ENCODE measurements at regions of chr6 and their contacts with region 1.

Region 1: DNA sequence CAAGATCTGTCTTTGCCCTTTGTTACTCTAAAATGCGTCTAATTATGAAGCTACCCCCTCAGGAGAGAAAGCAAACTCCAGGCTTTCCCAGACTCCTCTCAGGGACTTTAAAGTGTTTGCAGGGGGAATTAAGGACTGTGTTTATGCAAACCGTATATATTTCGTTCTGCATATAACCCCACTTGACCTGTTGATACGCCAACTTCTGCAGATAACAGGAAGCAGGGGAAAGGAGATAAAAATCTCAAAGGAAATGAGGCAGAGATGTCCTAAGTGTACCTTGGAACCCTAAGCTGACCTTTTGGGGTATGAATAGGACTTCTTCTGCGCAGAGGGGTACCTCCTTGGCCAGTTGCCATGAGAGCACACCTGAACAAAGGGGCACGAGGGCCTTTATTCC is 8.1 kb downstream of the SYCP2L start:
- DNase-seq: no peak
- ATAC-seq: no peak
- H3K4me3 ChIP-seq: no peak overlapping the region
- H3K27ac ChIP-seq: no peak overlapping the region
- H3K4me1 ChIP-seq: no peaks in the 10 kb centered on the region
- H3K27me3 ChIP-seq: no peaks in the 10 kb centered on the region
- CTCF ChIP-seq: no peak

Region 2: DNA sequence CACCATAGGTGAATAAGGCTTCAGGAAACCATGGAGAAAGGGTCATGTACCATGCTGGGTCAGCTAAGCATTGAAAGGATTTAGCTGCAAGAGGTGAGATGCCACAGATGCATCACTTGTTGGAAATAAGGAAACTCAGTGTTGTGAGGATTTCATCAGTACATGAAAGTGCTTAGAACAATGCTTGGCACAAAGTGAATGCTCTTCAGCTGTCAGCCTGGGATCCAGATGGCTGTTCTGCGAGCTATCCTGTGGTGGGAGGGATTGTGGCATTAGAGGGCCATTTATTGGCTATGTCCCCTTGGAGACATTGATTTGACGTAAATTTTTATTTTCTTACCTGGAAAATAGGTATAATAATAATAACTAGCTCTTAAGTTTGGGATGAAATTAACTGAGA is 96.2 kb after region 1 on chr6:
- CTCF ChIA-PET with region 1: no interaction called
- POLR2A ChIA-PET with region 1: interaction called, 10 read pairs
- in situ Hi-C with region 1: no loop called
- intact Hi-C with region 1: no loop called
- DNase-seq: no peak
- ATAC-seq: no peak
- H3K4me3 ChIP-seq: no peak overlapping the region
- H3K27ac ChIP-seq: no peak overlapping the region
- H3K4me1 ChIP-seq: no peaks in the 10 kb centered on the region
- H3K27me3 ChIP-seq: no peaks in the 10 kb centered on the region
- CTCF ChIP-seq: no peak

Measured in Panc1 (cell line).